ENCODE measurements at regions of chr9 and their contacts with region 1.

Region 1: DNA sequence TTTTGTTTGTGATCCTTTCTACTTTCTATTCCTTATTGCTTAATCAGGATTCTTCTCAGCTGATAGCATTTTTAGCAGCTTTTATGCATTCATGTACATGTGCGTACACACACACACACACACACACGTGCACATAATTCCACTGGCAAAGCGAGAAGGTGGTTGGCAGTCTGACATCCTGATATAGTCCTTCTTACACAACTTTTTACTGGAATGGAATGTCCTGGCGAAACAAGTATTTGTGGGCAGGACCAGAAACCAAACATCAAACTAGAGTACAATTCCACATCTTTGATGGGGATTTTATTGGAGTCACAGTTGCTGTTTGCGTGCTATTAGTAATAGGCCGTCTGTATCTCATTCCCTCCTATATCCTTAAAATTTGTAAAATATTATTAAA is 356.5 kb downstream of the CCDC171 start:
- DNase-seq: no peak
- ATAC-seq: no peak

Region 2: DNA sequence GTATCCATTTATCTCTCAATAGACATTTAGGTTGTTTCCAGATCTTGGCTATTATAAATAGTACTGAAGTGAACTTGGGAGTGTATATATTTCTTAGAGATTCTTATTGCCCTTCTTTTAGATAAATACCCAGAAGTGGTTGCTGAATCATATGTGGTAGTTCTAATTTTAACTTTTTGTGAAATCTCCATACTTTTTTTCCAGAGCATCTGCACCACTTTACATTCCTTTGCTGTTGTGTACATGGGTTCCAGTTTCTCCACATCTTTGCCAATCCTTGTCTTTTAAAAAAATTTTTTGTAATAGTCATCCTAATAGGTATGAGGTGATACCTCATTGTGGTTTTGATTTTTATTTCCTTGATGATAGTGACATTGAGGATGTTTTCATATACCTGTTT is 52.7 kb before region 1 on chr9:
- intact Hi-C with region 1: loop called in 1 of 2 experiments (anchors 10 kb)
- DNase-seq: no peak
- ATAC-seq: no peak

Region 3: GRCh38 chr9:16074963-16075362 is 165.7 kb after region 1 on chr9:
- intact Hi-C with region 1: no loop called
- DNase-seq: no peak
- ATAC-seq: no peak